ENCODE measurements at regions of chr12 and their contacts with region 1.

Region 1: GRCh38 chr12:120710031-120710804 is at the start of gene UNC119B:
- DNase-seq: peak; percentile 53 to 82 (median 69)
- ATAC-seq: peak; percentile 92
- H3K4me3 ChIP-seq: peak within 1 kb of the TSS; percentile 69
- H3K4me3 Mint-ChIP-seq: peak within 1 kb of the TSS; percentile 87 to 98 (median 95)
- H3K27ac ChIP-seq: peak within 1 kb of the TSS; percentile 83
- H3K27ac Mint-ChIP-seq: peak within 1 kb of the TSS; percentile 87 to 96 (median 92)
- H3K4me1 ChIP-seq: peaks cover 5 to 7% of the 10 kb centered on the region in 2 donors
- H3K4me1 Mint-ChIP-seq: peaks cover 20 to 40% (median 37%) of the 10 kb centered on the region in 7 donors
- H3K27me3 ChIP-seq: no peaks in the 10 kb centered on the region
- H3K27me3 Mint-ChIP-seq: no peaks in the 10 kb centered on the region
- total RNA-seq, gene UNC119B: 10.9 to 26.7 (median 18.8) TPM

Region 2: GRCh38 chr12:120342156-120342555 is 368.1 kb before region 1 on chr12:
- CTCF ChIA-PET with region 1: no interaction called
- POLR2A ChIA-PET with region 1: no interaction called
- intact Hi-C with region 1: no loop called
- DNase-seq: no peak
- ATAC-seq: no peak
- H3K4me3 ChIP-seq: no peak overlapping the region
- H3K4me3 Mint-ChIP-seq: no peak overlapping the region
- H3K27ac ChIP-seq: no peak overlapping the region
- H3K27ac Mint-ChIP-seq: no peak overlapping the region
- H3K4me1 ChIP-seq: no peaks in the 10 kb centered on the region
- H3K4me1 Mint-ChIP-seq: no peaks in the 10 kb centered on the region
- H3K27me3 ChIP-seq: no peaks in the 10 kb centered on the region
- H3K27me3 Mint-ChIP-seq: peaks cover 0 to 17% (median 7%) of the 10 kb centered on the region in 5 donors

Region 3: DNA sequence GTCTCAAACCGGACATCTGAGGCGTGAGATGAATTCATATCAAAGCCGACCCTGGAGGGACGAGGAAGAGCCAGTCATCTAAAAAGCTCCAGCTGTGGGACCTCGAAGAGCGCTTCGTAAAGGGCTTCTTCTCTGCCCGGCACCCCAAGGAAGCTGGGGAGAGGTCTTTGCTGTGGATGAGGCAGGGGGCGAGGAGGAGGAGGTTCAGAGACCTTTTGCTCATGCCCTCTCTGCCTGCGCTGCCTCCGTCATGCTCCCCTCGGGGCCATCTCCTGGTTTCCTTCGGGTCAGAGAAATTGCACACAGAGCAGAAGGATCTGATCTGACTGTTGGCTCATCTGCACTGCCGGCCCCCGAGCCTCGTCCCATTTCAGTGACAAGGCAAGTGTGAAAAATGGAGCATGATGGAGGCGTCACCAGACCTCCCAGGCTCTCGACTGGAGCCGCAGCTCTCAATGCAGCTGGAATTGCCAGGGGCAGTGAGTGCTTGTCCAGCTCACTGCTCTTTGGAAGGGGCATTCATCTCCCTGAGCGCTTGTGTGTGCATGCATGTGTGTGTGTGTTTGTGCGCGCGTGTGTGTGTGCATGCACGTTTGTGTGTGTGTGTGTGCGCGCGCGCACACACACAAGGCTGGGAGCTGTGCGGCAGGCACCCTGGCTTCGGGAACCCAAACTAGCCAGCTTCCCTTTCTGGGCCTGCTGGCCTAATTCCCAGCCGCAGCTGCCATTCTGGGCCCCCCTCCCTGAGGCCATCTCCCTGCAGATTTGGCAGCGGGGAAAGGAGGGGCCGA is 60.6 kb before region 1 on chr12:
- CTCF ChIA-PET with region 1: interaction called, 17 read pairs
- POLR2A ChIA-PET with region 1: interaction called, 5 read pairs
- intact Hi-C with region 1: loop called (anchors 1 kb)
- DNase-seq: no peak
- ATAC-seq: no peak
- H3K4me3 ChIP-seq: no peak overlapping the region
- H3K4me3 Mint-ChIP-seq: peak overlapping the region in 8 of 10 donors; percentile 31 to 78 (median 49)
- H3K27ac ChIP-seq: no peak overlapping the region
- H3K27ac Mint-ChIP-seq: no peak overlapping the region
- H3K4me1 ChIP-seq: peaks cover 6 to 7% of the 10 kb centered on the region in 2 donors
- H3K4me1 Mint-ChIP-seq: peaks cover 6 to 16% (median 13%) of the 10 kb centered on the region in 7 donors
- H3K27me3 ChIP-seq: peaks cover 3 to 5% of the 10 kb centered on the region in 2 donors
- H3K27me3 Mint-ChIP-seq: peaks cover 42 to 63% (median 58%) of the 10 kb centered on the region in 5 donors

Region 4: GRCh38 chr12:120677765-120678473 is 32.3 kb before region 1 on chr12:
- CTCF ChIA-PET with region 1: no interaction called
- POLR2A ChIA-PET with region 1: interaction called, 3 read pairs
- intact Hi-C with region 1: loop called in 1 of 2 experiments (anchors 5 kb)
- DNase-seq: no peak
- ATAC-seq: no peak
- H3K4me3 ChIP-seq: no peak overlapping the region
- H3K4me3 Mint-ChIP-seq: peak overlapping the region in 1 of 10 donors; percentile 12
- H3K27ac ChIP-seq: no peak overlapping the region
- H3K27ac Mint-ChIP-seq: peak overlapping the region in 1 of 9 donors; percentile 60
- H3K4me1 ChIP-seq: no peaks in the 10 kb centered on the region
- H3K4me1 Mint-ChIP-seq: peaks cover 0 to 26% (median 0%) of the 10 kb centered on the region in 7 donors
- H3K27me3 ChIP-seq: no peaks in the 10 kb centered on the region
- H3K27me3 Mint-ChIP-seq: peaks cover 0 to 6% (median 0%) of the 10 kb centered on the region in 5 donors

Region 5: GRCh38 chr12:120725659-120726509 is 15.7 kb after region 1 on chr12 and contains the start of gene ACADS:
- CTCF ChIA-PET with region 1: interaction called, 3 read pairs
- POLR2A ChIA-PET with region 1: no interaction called
- intact Hi-C with region 1: loop called (anchors 1 to 2 kb)
- DNase-seq: peak; percentile 78 to 94 (median 85)
- ATAC-seq: peak; percentile 100
- H3K4me3 ChIP-seq: peak within 1 kb of the TSS; percentile 78
- H3K4me3 Mint-ChIP-seq: peak within 1 kb of the TSS; percentile 88 to 98 (median 94)
- H3K27ac ChIP-seq: peak within 1 kb of the TSS; percentile 76
- H3K27ac Mint-ChIP-seq: peak within 1 kb of the TSS; percentile 56 to 95 (median 82)
- H3K4me1 ChIP-seq: peaks cover 12 to 13% of the 10 kb centered on the region in 2 donors
- H3K4me1 Mint-ChIP-seq: peaks cover 6 to 28% (median 23%) of the 10 kb centered on the region in 7 donors
- H3K27me3 ChIP-seq: no peaks in the 10 kb centered on the region
- H3K27me3 Mint-ChIP-seq: no peaks in the 10 kb centered on the region
- total RNA-seq, gene ACADS: 10.4 to 18.1 (median 15.7) TPM